ENCODE measurements at regions of chr6 and their contacts with region 1.

Region 1: DNA sequence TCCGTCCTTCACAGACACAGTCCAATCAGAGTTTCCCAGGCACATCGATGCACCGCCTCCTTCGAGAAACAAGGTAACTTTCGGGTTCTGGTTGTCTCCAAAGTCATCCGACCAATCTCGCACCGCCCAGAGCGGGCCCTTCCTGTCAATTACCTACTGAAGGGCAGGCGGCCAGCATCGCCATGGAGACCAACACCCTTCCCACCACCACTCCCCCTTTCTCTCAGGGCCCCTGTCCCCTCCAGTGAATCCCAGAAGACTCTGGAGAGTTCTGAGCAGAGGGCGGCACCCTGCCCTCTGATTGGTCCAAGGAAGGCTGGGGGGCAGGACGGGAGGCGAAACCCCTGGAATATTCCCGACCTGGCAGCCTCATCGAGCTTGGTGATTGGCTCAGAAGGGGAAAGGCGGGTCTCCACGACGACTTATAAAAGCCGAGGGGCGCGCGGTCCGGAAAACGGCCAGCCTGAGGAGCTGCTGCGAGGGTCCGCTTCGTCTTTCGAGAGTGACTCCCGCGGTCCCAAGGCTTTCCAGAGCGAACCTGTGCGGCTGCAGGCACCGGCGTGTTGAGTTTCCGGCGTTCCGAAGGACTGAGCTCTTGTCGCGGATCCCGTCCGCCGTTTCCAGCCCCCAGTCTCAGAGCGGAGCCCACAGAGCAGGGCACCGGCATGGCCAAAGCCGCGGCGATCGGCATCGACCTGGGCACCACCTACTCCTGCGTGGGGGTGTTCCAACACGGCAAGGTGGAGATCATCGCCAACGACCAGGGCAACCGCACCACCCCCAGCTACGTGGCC is at the start of gene HSPA1B:
- DNase-seq: peak; percentile 92
- ATAC-seq: peak; percentile 72
- H3K4me3 ChIP-seq: peak within 1 kb of the TSS; percentile 69 to 93 (median 80)
- H3K4me3 Mint-ChIP-seq: peak within 1 kb of the TSS; percentile 85
- H3K27ac ChIP-seq: peak within 1 kb of the TSS; percentile 87 to 89
- H3K27ac Mint-ChIP-seq: peak within 1 kb of the TSS; percentile 96
- H3K4me1 ChIP-seq: peaks cover 19 to 41% of the 10 kb centered on the region in 2 donors
- H3K4me1 Mint-ChIP-seq: peaks cover 32% of the 10 kb centered on the region
- H3K27me3 ChIP-seq: no peaks in the 10 kb centered on the region
- H3K27me3 Mint-ChIP-seq: no peaks in the 10 kb centered on the region
- CTCF ChIP-seq: no peak
- total RNA-seq, gene HSPA1B: 79.2 and 89.9 TPM in 2 replicates

Region 2: GRCh38 chr6:31568537-31568961 is 258.9 kb before region 1 on chr6:
- CTCF ChIA-PET with region 1: interaction called, 3 read pairs
- POLR2A ChIA-PET with region 1: interaction called, 11 read pairs
- intact Hi-C with region 1: no loop called
- DNase-seq: peak; percentile 94
- ATAC-seq: peak; percentile 70
- H3K4me3 ChIP-seq: peak overlapping the region in 1 of 5 experiments; percentile 19
- H3K4me3 Mint-ChIP-seq: peak overlapping the region; percentile 63
- H3K27ac ChIP-seq: peak overlapping the region; percentile 78 to 94
- H3K27ac Mint-ChIP-seq: peak overlapping the region; percentile 89
- H3K4me1 ChIP-seq: peaks cover 62 to 68% of the 10 kb centered on the region in 2 donors
- H3K4me1 Mint-ChIP-seq: peaks cover 75% of the 10 kb centered on the region
- H3K27me3 ChIP-seq: no peaks in the 10 kb centered on the region
- H3K27me3 Mint-ChIP-seq: no peaks in the 10 kb centered on the region
- CTCF ChIP-seq: no peak

Region 3: DNA sequence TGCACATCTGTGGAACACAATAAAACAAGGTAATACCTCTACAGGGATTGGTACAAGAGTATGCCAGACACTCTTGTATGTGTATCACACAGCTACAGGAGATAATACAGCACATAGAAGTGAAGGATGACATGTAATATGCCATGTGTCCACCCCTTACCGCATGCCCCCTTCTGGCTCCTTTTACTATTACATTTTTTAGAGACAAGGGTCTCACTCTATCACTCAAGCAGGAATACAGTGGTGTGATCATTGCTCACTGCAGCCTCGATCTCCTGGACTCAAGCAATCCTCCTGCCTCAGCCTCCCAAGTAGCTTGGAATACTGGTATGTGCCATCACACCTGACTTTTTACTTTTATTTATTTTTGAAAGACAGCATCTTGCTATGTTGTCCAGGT is 230.5 kb before region 1 on chr6:
- CTCF ChIA-PET with region 1: interaction called, 52 read pairs
- POLR2A ChIA-PET with region 1: interaction called, 5 read pairs
- intact Hi-C with region 1: no loop called
- DNase-seq: peak; percentile 86
- ATAC-seq: peak; percentile 68
- H3K4me3 ChIP-seq: no peak overlapping the region
- H3K4me3 Mint-ChIP-seq: peak overlapping the region; percentile 35
- H3K27ac ChIP-seq: peak overlapping the region in 1 of 2 donors; percentile 27
- H3K27ac Mint-ChIP-seq: peak overlapping the region; percentile 75
- H3K4me1 ChIP-seq: peaks cover 49 to 61% of the 10 kb centered on the region in 2 donors
- H3K4me1 Mint-ChIP-seq: peaks cover 52% of the 10 kb centered on the region
- H3K27me3 ChIP-seq: no peaks in the 10 kb centered on the region
- H3K27me3 Mint-ChIP-seq: no peaks in the 10 kb centered on the region
- CTCF ChIP-seq: peak; percentile 80

Region 4: GRCh38 chr6:31702819-31703522 is 124.5 kb before region 1 on chr6 and contains the start of gene ABHD16A:
- CTCF ChIA-PET with region 1: interaction called, 11 read pairs
- POLR2A ChIA-PET with region 1: interaction called, 6 read pairs
- intact Hi-C with region 1: no loop called
- DNase-seq: peak; percentile 99
- ATAC-seq: peak; percentile 95
- H3K4me3 ChIP-seq: peak within 1 kb of the TSS; percentile 65 to 98 (median 96)
- H3K4me3 Mint-ChIP-seq: peak within 1 kb of the TSS; percentile 98
- H3K27ac ChIP-seq: peak within 1 kb of the TSS; percentile 87 to 93
- H3K27ac Mint-ChIP-seq: peak within 1 kb of the TSS; percentile 91
- H3K4me1 ChIP-seq: peaks cover 20 to 28% of the 10 kb centered on the region in 2 donors
- H3K4me1 Mint-ChIP-seq: peaks cover 32% of the 10 kb centered on the region
- H3K27me3 ChIP-seq: no peaks in the 10 kb centered on the region
- H3K27me3 Mint-ChIP-seq: no peaks in the 10 kb centered on the region
- CTCF ChIP-seq: no peak
- total RNA-seq, gene ABHD16A: 78.3 and 90.3 TPM in 2 replicates

Region 5: GRCh38 chr6:31739639-31740396 is 87.7 kb before region 1 on chr6 and contains the start of gene MSH5:
- CTCF ChIA-PET with region 1: interaction called, 46 read pairs
- POLR2A ChIA-PET with region 1: interaction called, 4 read pairs
- intact Hi-C with region 1: no loop called
- DNase-seq: peak; percentile 96
- ATAC-seq: peak; percentile 82
- H3K4me3 ChIP-seq: peak within 1 kb of the TSS; percentile 71 to 90 (median 81)
- H3K4me3 Mint-ChIP-seq: peak within 1 kb of the TSS; percentile 100
- H3K27ac ChIP-seq: peak within 1 kb of the TSS; percentile 81 to 96
- H3K27ac Mint-ChIP-seq: peak within 1 kb of the TSS; percentile 91
- H3K4me1 ChIP-seq: peaks cover 39 to 42% of the 10 kb centered on the region in 2 donors
- H3K4me1 Mint-ChIP-seq: peaks cover 60% of the 10 kb centered on the region
- H3K27me3 ChIP-seq: no peaks in the 10 kb centered on the region
- H3K27me3 Mint-ChIP-seq: no peaks in the 10 kb centered on the region
- CTCF ChIP-seq: no peak
- total RNA-seq, gene MSH5: 49.9 and 50.1 TPM in 2 replicates

Region 6: GRCh38 chr6:31806465-31807272 is 20.8 kb before region 1 on chr6 and contains the start of gene LSM2:
- CTCF ChIA-PET with region 1: interaction called, 20 read pairs
- POLR2A ChIA-PET with region 1: interaction called, 13 read pairs
- intact Hi-C with region 1: no loop called
- DNase-seq: peak; percentile 97
- ATAC-seq: peak; percentile 98
- H3K4me3 ChIP-seq: peak within 1 kb of the TSS; percentile 68 to 84 (median 84)
- H3K4me3 Mint-ChIP-seq: peak within 1 kb of the TSS; percentile 87
- H3K27ac ChIP-seq: peak within 1 kb of the TSS; percentile 77 to 93
- H3K27ac Mint-ChIP-seq: peak within 1 kb of the TSS; percentile 88
- H3K4me1 ChIP-seq: peaks cover 8 to 11% of the 10 kb centered on the region in 2 donors
- H3K4me1 Mint-ChIP-seq: peaks cover 16% of the 10 kb centered on the region
- H3K27me3 ChIP-seq: no peaks in the 10 kb centered on the region
- H3K27me3 Mint-ChIP-seq: no peaks in the 10 kb centered on the region
- CTCF ChIP-seq: peak; percentile 34
- total RNA-seq, gene LSM2: 45.3 and 52.4 TPM in 2 replicates

Measured in B cell (primary cell).